Dorsolateral prefrontal cortex (tissue), 120 donors: ENCODE measurements at regions of chr1 and their contacts with region 1.

Region 1: GRCh38 chr1:19341201-19342072 is 29.3 kb downstream of the SLC66A1 start:
- DNase-seq: peak in 9 of 10 donors; percentile 48 to 76 (median 71)
- H3K4me3 ChIP-seq: no peak overlapping the region
- H3K27ac ChIP-seq: peak overlapping the region in 22 of 59 donors; percentile 3 to 82 (median 38)
- H3K27me3 ChIP-seq: no peaks in the 10 kb centered on the region
- CTCF ChIP-seq: peak; percentile 58 to 91 (median 79)

Region 2: GRCh38 chr1:19251305-19252196 is 89.9 kb before region 1 on chr1 and contains the starts of genes EMC1 and MRTO4:
- intact Hi-C with region 1: no loop called
- DNase-seq: peak; percentile 81 to 94 (median 91)
- H3K4me3 ChIP-seq: peak within 1 kb of the TSS; percentile 45 to 100 (median 92)
- H3K27ac ChIP-seq: peak within 1 kb of the TSS; percentile 80 to 100 (median 99)
- H3K27me3 ChIP-seq: no peaks in the 10 kb centered on the region
- CTCF ChIP-seq: peak in 35 of 56 donors; percentile 5 to 54 (median 28)
- total RNA-seq, gene EMC1: 58.6 to 120 (median 88.1) TPM
- total RNA-seq, gene MRTO4: 18.3 to 47.2 (median 30.0) TPM

Region 3: GRCh38 chr1:19384113-19384512 is 42.7 kb after region 1 on chr1:
- intact Hi-C with region 1: loop called in 1 of 2 experiments (anchors 1 kb)
- DNase-seq: no peak
- H3K4me3 ChIP-seq: no peak overlapping the region
- H3K27ac ChIP-seq: peak overlapping the region in 6 of 59 donors; percentile 10 to 28 (median 10)
- H3K27me3 ChIP-seq: no peaks in the 10 kb centered on the region
- CTCF ChIP-seq: no peak

Region 4: DNA sequence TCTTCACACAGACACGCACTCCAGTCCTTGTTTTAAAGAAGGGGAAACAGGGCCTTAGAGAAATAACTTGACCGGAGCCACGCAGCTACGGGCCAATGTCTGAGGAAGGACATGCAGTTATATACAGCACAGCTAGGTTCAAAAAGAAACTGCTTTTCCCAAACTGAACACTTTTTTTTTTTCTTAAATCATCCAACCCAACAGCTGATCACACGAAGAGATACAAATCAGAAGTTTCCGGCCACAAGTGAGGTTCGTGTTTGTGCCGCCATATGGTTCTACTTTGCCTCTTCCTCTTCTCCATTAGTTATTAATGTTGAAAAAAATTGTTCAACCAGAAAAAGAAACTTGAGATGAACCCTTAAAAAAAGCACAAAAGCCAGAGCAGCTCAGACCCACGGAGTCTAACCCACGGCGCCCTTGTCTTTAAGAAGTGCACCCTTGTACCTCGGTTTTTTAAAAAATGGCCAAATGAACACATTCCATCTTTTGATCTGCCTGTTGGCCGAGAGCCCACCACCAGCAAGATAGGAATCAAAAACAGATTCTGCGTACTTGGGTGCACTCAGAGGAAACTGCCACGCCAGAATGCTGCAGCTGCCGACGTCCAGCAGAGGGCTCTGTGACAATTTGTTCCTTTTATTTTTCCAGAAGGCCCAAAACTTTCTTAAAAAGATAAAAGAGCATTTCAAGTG is 49.6 kb after region 1 on chr1:
- intact Hi-C with region 1: loop called (anchors 1 to 10 kb)
- DNase-seq: peak in 3 of 10 donors; percentile 40 to 60 (median 57)
- H3K4me3 ChIP-seq: peak overlapping the region in 10 of 59 donors; percentile 3 to 34 (median 9)
- H3K27ac ChIP-seq: peak overlapping the region in 57 of 59 donors; percentile 24 to 86 (median 68)
- H3K27me3 ChIP-seq: no peaks in the 10 kb centered on the region
- CTCF ChIP-seq: peak; percentile 57 to 94 (median 84)

Region 5: GRCh38 chr1:19468397-19468956 is 127.0 kb after region 1 on chr1:
- intact Hi-C with region 1: loop called in 1 of 2 experiments (anchors 5 kb)
- DNase-seq: no peak
- H3K4me3 ChIP-seq: no peak overlapping the region
- H3K27ac ChIP-seq: peak overlapping the region in 40 of 59 donors; percentile 1 to 73 (median 46)
- H3K27me3 ChIP-seq: no peaks in the 10 kb centered on the region
- CTCF ChIP-seq: no peak